ENCODE measurements at regions of chr2 and their contacts with region 1.

Region 1: GRCh38 chr2:10408649-10409579 is 39.2 kb downstream of the ODC1 start:
- DNase-seq: peak; percentile 64 to 85 (median 73)
- H3K4me3 ChIP-seq: peak overlapping the region in 5 of 59 donors; percentile 5 to 14 (median 9)
- H3K27ac ChIP-seq: peak overlapping the region in 4 of 59 donors; percentile 5 to 22 (median 8)
- H3K27me3 ChIP-seq: no peaks in the 10 kb centered on the region
- CTCF ChIP-seq: peak; percentile 55 to 99 (median 96)

Region 2: GRCh38 chr2:10122386-10123280 is 286.3 kb before region 1 on chr2 and contains the start of gene RRM2:
- intact Hi-C with region 1: loop called in 1 of 2 experiments (anchors 5 kb)
- DNase-seq: peak; percentile 87 to 95 (median 92)
- H3K4me3 ChIP-seq: peak within 1 kb of the TSS; percentile 41 to 78 (median 61)
- H3K27ac ChIP-seq: no peak within 1 kb of the TSS
- H3K27me3 ChIP-seq: peaks cover 0 to 31% (median 18%) of the 10 kb centered on the region in 45 donors
- CTCF ChIP-seq: peak in 8 of 56 donors; percentile 3 to 23 (median 12)
- total RNA-seq, gene RRM2: 0.11 to 3.3 (median 0.83) TPM in 45 of 120 experiments, not detected in the others

Region 3: DNA sequence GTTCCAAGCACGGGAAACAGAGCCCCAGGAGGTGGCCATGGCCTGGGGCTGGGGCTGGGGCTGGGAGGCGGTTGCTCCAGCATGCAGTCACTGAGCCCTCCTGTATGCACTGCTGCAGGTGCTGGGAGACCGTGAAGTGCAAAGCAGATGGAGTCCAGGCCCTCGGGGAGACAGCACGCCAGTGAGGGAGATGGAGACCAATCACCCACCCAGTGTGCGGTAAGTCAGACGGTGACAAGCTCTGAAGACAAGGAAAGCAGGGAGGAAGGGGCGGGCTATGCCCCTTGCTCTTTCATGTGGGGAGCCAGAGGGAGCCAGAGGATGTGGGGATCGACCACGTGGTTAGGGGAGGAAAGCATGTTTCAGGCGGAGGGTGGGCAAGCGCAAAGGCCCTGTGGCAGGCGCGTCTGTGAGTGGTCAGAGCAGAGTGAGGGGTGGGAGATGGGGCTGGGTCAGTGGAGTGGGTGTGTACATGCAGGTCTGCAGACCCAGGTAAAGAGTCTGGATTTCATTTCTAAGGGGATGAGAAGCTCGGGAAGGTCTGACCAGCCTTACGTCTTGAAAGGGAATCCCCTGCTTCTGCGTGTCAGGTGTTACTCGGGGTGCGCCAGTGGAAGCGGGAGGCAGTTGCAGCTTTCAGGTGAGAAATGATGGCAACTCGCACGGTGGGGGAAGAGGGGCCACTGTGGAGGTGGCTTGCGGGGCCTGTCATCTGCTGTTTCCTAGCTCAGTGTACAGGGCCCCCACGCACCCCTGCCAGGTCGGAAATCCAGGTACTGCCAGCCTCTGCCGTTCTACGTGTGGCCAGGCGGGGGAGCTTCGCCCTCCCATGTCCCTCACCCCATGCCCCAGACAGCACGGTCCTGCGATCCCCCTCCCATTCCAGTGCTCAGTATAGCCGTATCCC is 266.9 kb before region 1 on chr2:
- intact Hi-C with region 1: loop called (anchors 5 kb)
- DNase-seq: peak in 1 of 10 donors; percentile 31
- H3K4me3 ChIP-seq: no peak overlapping the region
- H3K27ac ChIP-seq: peak overlapping the region in 1 of 59 donors; percentile 12
- H3K27me3 ChIP-seq: no peaks in the 10 kb centered on the region
- CTCF ChIP-seq: peak in 50 of 56 donors; percentile 13 to 63 (median 43)

Region 4: GRCh38 chr2:10269711-10270610 is 139.0 kb before region 1 on chr2:
- intact Hi-C with region 1: loop called in 1 of 2 experiments (anchors 2 kb)
- DNase-seq: peak in 6 of 10 donors; percentile 13 to 39 (median 28)
- H3K4me3 ChIP-seq: no peak overlapping the region
- H3K27ac ChIP-seq: no peak overlapping the region
- H3K27me3 ChIP-seq: no peaks in the 10 kb centered on the region
- CTCF ChIP-seq: no peak

Region 5: GRCh38 chr2:10285556-10286198 is 123.2 kb before region 1 on chr2:
- intact Hi-C with region 1: loop called (anchors 1 to 5 kb)
- DNase-seq: peak in 9 of 10 donors; percentile 79 to 93 (median 88)
- H3K4me3 ChIP-seq: peak overlapping the region in 3 of 59 donors; percentile 5 to 16 (median 15)
- H3K27ac ChIP-seq: peak overlapping the region; percentile 34 to 96 (median 86)
- H3K27me3 ChIP-seq: no peaks in the 10 kb centered on the region
- CTCF ChIP-seq: peak in 41 of 56 donors; percentile 10 to 63 (median 30)

Region 6: GRCh38 chr2:10302479-10303180 is 106.3 kb before region 1 on chr2 and contains the start of gene HPCAL1:
- intact Hi-C with region 1: loop called in 1 of 2 experiments (anchors 5 kb)
- DNase-seq: peak in 9 of 10 donors; percentile 61 to 89 (median 78)
- H3K4me3 ChIP-seq: peak within 1 kb of the TSS; percentile 49 to 95 (median 80)
- H3K27ac ChIP-seq: peak within 1 kb of the TSS in 55 of 59 donors; percentile 5 to 87 (median 77)
- H3K27me3 ChIP-seq: no peaks in the 10 kb centered on the region
- CTCF ChIP-seq: peak; percentile 18 to 87 (median 66)
- total RNA-seq, gene HPCAL1: 40.1 to 252 (median 129) TPM

Region 7: DNA sequence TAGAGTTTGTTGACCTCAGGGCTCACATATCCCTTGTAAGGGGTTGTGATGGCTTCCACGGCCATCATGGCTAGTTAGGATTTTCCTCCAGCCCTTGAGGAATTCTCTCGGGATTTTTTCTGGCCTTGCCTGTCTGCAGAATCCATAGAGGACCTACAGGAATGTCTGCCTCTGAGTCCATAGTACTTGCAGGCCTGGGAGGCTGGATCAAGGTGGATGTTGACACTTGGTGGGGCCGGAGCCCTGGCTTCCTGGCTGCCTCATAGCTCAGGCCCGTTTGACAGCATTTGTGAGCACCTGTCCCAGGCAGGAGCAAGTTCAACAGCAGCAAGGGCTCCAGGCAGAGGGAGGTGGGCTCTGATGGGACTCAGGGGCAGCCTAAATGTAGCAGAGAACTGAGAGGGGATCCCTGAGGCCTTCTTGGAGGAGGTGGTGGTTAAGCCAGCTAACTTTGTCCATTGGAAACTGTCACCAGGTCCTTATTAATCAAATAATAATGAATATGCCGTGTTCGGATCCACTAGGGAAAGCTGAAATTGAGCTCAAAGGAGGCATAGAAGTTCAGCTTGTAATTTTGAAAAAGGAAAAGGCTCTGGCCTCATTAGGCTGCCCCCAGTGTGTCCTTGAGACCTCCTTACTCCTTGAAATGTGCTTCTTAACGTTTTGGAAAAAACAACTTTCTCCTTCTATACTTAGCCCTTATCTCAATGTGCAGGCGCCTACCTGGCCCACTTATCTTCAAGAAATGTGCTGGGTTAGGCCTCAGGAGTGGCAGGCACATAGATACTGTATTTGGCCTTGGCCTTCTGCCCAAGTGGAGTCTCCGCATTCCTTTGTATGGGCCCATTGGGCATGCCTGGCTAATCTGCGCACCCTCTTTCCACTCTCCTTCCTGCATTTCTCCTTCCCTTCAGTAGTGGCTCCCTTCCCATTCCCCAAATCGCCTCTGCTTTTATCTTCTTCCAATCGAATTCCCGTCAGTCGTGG is 39.4 kb before region 1 on chr2:
- intact Hi-C with region 1: loop called in 1 of 2 experiments (anchors 5 kb)
- DNase-seq: no peak
- H3K4me3 ChIP-seq: peak overlapping the region in 3 of 59 donors; percentile 6 to 38 (median 21)
- H3K27ac ChIP-seq: peak overlapping the region in 3 of 59 donors; percentile 11 to 25 (median 25)
- H3K27me3 ChIP-seq: no peaks in the 10 kb centered on the region
- CTCF ChIP-seq: no peak

Measured in dorsolateral prefrontal cortex (tissue), 120 donors.